ENCODE measurements at regions of chr2 and their contacts with region 1.

Region 1: DNA sequence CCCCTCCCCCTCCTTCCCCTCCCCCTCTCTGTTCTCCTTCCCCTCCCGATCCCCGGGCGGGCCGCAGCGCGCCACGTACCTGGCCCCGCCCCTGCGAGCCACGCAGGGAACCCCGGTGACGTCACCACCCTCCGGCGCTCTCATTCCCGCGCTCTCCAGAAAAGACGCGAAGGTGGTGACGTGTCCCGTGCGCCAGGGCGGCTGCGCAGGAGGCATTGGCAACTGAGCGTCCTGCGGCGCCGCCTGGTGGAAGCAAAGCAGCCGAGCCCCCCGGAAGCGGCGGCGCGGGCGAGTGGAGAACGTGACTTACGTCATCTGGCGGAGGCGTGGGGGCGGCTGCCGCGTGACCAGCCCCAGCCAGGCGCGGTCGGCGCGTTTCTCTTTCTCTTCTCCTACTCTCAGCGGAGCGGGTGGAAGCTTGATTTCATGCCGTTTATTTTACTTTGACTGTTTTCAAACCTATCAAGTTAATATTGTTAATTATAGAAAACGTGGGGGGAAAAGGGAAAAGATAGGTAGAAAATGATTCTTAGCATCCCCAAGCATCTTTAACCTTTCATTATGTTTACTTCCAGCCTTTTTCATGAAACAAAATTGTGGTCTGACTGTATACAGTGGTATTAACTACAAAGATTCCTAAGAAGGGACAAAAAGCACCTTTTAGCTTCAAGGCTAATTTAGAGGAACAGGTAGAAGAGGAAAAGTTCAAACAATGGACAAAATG is 48.1 kb downstream of the C2orf42 start:
- DNase-seq: peak; percentile 99 to 100
- H3K4me3 ChIP-seq: peak overlapping the region; percentile 64
- H3K4me3 Mint-ChIP-seq: peak overlapping the region; percentile 83
- H3K27ac Mint-ChIP-seq: peak overlapping the region; percentile 99
- H3K4me1 ChIP-seq: peaks cover 32% of the 10 kb centered on the region
- H3K4me1 Mint-ChIP-seq: peaks cover 21% of the 10 kb centered on the region
- H3K27me3 ChIP-seq: no peaks in the 10 kb centered on the region
- H3K27me3 Mint-ChIP-seq: no peaks in the 10 kb centered on the region
- CTCF ChIP-seq: peak; percentile 94 to 95

Region 2: DNA sequence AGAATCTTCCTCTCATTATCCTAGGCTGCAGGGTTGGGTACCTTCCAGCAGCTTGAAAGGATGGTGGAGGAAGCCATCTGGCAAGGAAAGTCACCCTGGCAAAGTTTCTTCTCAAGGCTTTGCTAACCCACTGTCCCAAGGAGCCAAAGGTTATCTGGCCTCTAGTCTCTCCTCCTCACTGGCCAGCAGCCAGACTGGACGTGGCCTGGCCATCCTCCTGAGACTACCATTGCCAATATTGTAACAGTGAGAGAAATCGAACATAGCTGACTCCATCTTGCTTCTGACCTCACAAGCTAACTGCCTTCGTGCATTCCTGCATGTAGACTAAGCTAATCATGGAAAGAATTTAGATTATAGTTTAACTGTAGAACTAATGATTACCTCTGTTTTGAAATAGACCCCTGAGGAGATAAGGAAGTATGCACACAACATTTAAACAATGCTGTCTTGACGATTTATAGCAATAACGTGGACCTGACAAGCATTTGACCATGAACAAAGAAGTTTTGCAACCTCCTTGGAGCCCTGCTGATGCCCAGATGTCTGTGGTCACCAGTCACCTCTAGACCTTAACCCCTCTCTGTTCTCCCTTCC is 408.6 kb before region 1 on chr2:
- CTCF ChIA-PET with region 1: no interaction called
- POLR2A ChIA-PET with region 1: no interaction called
- intact Hi-C with region 1: loop called (anchors 2 kb)
- DNase-seq: peak; percentile 61 to 77
- H3K4me3 ChIP-seq: no peak overlapping the region
- H3K4me3 Mint-ChIP-seq: no peak overlapping the region
- H3K27ac Mint-ChIP-seq: peak overlapping the region; percentile 81
- H3K4me1 ChIP-seq: peaks cover 23% of the 10 kb centered on the region
- H3K4me1 Mint-ChIP-seq: peaks cover 23% of the 10 kb centered on the region
- H3K27me3 ChIP-seq: no peaks in the 10 kb centered on the region
- H3K27me3 Mint-ChIP-seq: no peaks in the 10 kb centered on the region
- CTCF ChIP-seq: no peak

Region 3: DNA sequence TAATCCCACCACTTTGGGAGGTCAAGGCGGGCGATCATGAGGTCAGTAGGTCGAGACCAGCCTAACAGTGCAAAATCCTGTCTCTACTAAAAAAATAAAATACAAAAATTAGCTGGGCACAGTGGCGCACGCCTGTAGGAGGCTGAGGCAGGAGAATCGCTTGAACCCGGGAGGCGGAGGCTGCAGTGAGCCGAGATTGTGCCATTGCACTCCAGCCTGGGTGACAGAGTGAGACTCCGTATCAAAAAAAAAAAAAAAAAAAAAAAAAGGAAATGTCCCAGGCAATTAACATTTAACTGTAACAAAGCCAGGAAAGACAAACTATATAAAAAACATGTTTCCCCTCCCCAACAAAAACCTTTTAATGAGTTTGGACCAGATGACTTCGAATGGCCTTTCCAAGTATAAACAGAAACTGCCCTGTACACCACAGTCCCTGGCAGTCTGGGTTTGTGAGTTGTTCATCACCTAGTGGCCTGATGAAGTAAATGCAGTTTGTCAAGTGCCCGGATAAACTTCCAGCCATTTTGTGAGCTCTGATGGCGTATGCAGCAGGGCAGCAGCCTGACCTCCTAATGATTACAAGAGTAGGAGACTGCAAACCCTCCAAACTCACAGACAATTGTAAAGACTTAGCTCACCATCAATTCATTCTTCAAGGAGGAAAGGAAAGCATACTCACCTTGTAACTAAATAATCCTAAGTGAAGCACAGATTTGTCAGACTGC is 72.0 kb before region 1 on chr2:
- CTCF ChIA-PET with region 1: interaction called, 10 read pairs
- POLR2A ChIA-PET with region 1: interaction called, 4 read pairs
- intact Hi-C with region 1: no loop called
- DNase-seq: peak; percentile 76 to 79
- H3K4me3 ChIP-seq: no peak overlapping the region
- H3K4me3 Mint-ChIP-seq: no peak overlapping the region
- H3K27ac Mint-ChIP-seq: peak overlapping the region; percentile 38
- H3K4me1 ChIP-seq: peaks cover 14% of the 10 kb centered on the region
- H3K4me1 Mint-ChIP-seq: peaks cover 13% of the 10 kb centered on the region
- H3K27me3 ChIP-seq: no peaks in the 10 kb centered on the region
- H3K27me3 Mint-ChIP-seq: no peaks in the 10 kb centered on the region
- CTCF ChIP-seq: peak; percentile 79 to 91

Region 4: GRCh38 chr2:70104231-70105111 is 38.3 kb before region 1 on chr2:
- CTCF ChIA-PET with region 1: interaction called, 11 read pairs
- POLR2A ChIA-PET with region 1: interaction called, 26 read pairs
- intact Hi-C with region 1: loop called (anchors 1 kb)
- DNase-seq: peak; percentile 66 to 68
- H3K4me3 ChIP-seq: no peak overlapping the region
- H3K4me3 Mint-ChIP-seq: peak overlapping the region; percentile 47
- H3K27ac Mint-ChIP-seq: peak overlapping the region; percentile 68
- H3K4me1 ChIP-seq: peaks cover 30% of the 10 kb centered on the region
- H3K4me1 Mint-ChIP-seq: peaks cover 20% of the 10 kb centered on the region
- H3K27me3 ChIP-seq: no peaks in the 10 kb centered on the region
- H3K27me3 Mint-ChIP-seq: no peaks in the 10 kb centered on the region
- CTCF ChIP-seq: no peak

Region 5: GRCh38 chr2:70173520-70173919 is 30.8 kb after region 1 on chr2:
- CTCF ChIA-PET with region 1: no interaction called
- POLR2A ChIA-PET with region 1: no interaction called
- intact Hi-C with region 1: no loop called
- DNase-seq: no peak
- H3K4me3 ChIP-seq: no peak overlapping the region
- H3K4me3 Mint-ChIP-seq: no peak overlapping the region
- H3K27ac Mint-ChIP-seq: no peak overlapping the region
- H3K4me1 ChIP-seq: no peaks in the 10 kb centered on the region
- H3K4me1 Mint-ChIP-seq: no peaks in the 10 kb centered on the region
- H3K27me3 ChIP-seq: no peaks in the 10 kb centered on the region
- H3K27me3 Mint-ChIP-seq: no peaks in the 10 kb centered on the region
- CTCF ChIP-seq: no peak

Region 6: DNA sequence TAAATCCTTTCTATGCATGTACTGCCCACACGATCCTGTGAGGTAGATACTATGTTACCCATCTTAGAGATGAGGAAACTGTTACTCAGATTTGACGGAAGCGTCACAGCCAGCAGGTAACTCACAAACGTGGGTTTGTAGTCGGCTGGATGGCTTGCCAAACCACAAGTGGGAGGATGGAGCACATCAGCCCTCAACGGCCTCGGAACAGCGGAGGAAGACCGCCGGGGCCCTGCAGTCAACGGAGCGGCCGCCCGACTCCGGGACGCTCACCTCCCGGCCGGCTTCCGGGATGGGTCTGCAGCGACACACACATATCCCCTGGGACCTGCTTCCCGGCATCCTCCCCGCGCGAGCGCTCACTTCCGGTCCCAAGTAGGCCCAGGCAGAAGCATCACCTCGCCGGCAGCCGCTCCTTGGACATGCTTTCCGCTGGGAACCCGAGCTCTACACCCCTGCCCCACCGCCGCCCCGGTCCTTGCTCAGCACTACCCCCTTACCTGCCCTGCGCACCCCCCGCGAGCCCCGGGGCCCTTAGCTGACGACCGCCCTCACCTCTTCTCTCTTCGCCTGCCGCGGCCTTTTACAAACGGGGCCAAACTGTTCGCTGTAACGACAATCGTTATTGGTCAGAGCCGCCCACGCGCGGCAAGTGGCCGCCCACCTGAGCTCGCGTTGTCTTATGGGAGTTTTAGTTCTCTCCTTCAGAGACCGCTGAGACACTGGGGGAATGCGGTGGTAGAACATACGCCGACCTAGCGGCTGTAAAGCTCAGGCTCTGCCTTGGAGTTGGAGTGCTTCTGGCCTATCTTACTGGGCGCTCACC is 47.9 kb after region 1 on chr2 and contains the start of gene C2orf42:
- CTCF ChIA-PET with region 1: interaction called, 4 read pairs
- POLR2A ChIA-PET with region 1: interaction called, 12 read pairs
- intact Hi-C with region 1: loop called (anchors 2 kb)
- DNase-seq: peak; percentile 97 to 98
- H3K4me3 ChIP-seq: peak within 1 kb of the TSS; percentile 95
- H3K4me3 Mint-ChIP-seq: peak within 1 kb of the TSS; percentile 90
- H3K27ac Mint-ChIP-seq: peak within 1 kb of the TSS; percentile 97
- H3K4me1 ChIP-seq: 0 out of 2 replicates have a peak, but pooled peaks cover 6% of the 10 kb centered on the region
- H3K4me1 Mint-ChIP-seq: peaks cover 10% of the 10 kb centered on the region
- H3K27me3 ChIP-seq: no peaks in the 10 kb centered on the region
- H3K27me3 Mint-ChIP-seq: no peaks in the 10 kb centered on the region
- CTCF ChIP-seq: peak in 1 of 2 experiments; percentile 21
- total RNA-seq, gene C2orf42: 12.7 and 14.8 TPM in 2 replicates

Region 7: GRCh38 chr2:70420128-70420530 is 277.4 kb after region 1 on chr2:
- CTCF ChIA-PET with region 1: no interaction called
- POLR2A ChIA-PET with region 1: no interaction called
- intact Hi-C with region 1: no loop called
- DNase-seq: no peak
- H3K4me3 ChIP-seq: no peak overlapping the region
- H3K4me3 Mint-ChIP-seq: no peak overlapping the region
- H3K27ac Mint-ChIP-seq: no peak overlapping the region
- H3K4me1 ChIP-seq: no peaks in the 10 kb centered on the region
- H3K4me1 Mint-ChIP-seq: no peaks in the 10 kb centered on the region
- H3K27me3 ChIP-seq: no peaks in the 10 kb centered on the region; the same call in 1 of the 2 replicates
- H3K27me3 Mint-ChIP-seq: peaks cover 18% of the 10 kb centered on the region
- CTCF ChIP-seq: no peak